Prostate gland (tissue), 2 donors: ENCODE measurements at regions of chr1 and their contacts with region 1.

Region 1: GRCh38 chr1:19495799-19496624 is 10.7 kb upstream of the CAPZB start:
- DNase-seq: no peak
- H3K4me3 ChIP-seq: no peak overlapping the region
- H3K27ac ChIP-seq: peak overlapping the region in 1 of 2 donors; percentile 7
- H3K4me1 ChIP-seq: no peaks in the 10 kb centered on the region
- H3K27me3 ChIP-seq: no peaks in the 10 kb centered on the region
- CTCF ChIP-seq: no peak
- POLR2A ChIP-seq: no peak

Region 2: GRCh38 chr1:19385869-19386591 is 110.0 kb before region 1 on chr1:
- intact Hi-C with region 1: loop called (anchors 5 kb)
- DNase-seq: peak; percentile 88
- H3K4me3 ChIP-seq: no peak overlapping the region
- H3K27ac ChIP-seq: peak overlapping the region; percentile 53 to 80
- H3K4me1 ChIP-seq: peaks cover 26% of the 10 kb centered on the region
- H3K27me3 ChIP-seq: no peaks in the 10 kb centered on the region
- CTCF ChIP-seq: no peak
- POLR2A ChIP-seq: no peak

Region 3: GRCh38 chr1:19517017-19517416 is 21.0 kb after region 1 on chr1:
- intact Hi-C with region 1: no loop called
- DNase-seq: no peak
- H3K4me3 ChIP-seq: no peak overlapping the region
- H3K27ac ChIP-seq: no peak overlapping the region
- H3K4me1 ChIP-seq: peaks cover 6% of the 10 kb centered on the region
- H3K27me3 ChIP-seq: no peaks in the 10 kb centered on the region
- CTCF ChIP-seq: no peak
- POLR2A ChIP-seq: no peak

Region 4: GRCh38 chr1:19606817-19607642 is 111.0 kb after region 1 on chr1:
- intact Hi-C with region 1: no loop called
- DNase-seq: no peak
- H3K4me3 ChIP-seq: no peak overlapping the region
- H3K27ac ChIP-seq: peak overlapping the region; percentile 28 to 74
- H3K4me1 ChIP-seq: peaks cover 28% of the 10 kb centered on the region
- H3K27me3 ChIP-seq: no peaks in the 10 kb centered on the region
- CTCF ChIP-seq: no peak
- POLR2A ChIP-seq: no peak